KBM-7 (cell line): ENCODE measurements at regions of chr6 and their contacts with region 1.

Region 1: DNA sequence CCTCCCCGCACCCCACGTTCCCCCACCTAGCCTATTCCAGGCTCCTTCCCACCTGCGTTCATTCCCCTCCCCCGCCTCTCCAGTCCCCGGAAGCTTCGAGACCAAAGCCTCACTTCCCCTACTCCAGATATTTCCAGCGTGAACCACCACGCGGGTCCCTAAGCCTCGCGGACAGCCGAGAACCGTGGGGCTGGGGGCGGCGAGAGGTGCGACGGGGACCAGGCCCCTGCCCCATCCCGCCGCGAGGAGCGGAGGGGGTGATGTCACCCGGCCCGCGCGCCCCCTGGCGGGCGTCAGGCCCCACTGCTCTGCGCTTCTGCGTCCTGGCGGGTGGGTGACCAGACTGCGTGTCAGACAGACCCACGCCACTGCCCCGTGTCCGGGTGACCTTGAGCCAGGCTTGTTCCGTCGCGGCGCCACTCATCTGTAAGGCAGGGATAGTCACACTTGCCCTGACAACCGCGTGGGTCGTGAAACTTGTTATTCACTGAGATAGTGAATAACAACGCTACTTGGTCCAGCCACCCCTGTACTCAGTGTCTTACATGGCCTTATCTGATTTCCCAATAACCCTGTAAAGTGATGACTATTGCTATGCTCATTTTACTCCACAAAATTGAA is 9.0 kb upstream of the HSP90AB1 start:
- DNase-seq: peak; percentile 75

Region 2: DNA sequence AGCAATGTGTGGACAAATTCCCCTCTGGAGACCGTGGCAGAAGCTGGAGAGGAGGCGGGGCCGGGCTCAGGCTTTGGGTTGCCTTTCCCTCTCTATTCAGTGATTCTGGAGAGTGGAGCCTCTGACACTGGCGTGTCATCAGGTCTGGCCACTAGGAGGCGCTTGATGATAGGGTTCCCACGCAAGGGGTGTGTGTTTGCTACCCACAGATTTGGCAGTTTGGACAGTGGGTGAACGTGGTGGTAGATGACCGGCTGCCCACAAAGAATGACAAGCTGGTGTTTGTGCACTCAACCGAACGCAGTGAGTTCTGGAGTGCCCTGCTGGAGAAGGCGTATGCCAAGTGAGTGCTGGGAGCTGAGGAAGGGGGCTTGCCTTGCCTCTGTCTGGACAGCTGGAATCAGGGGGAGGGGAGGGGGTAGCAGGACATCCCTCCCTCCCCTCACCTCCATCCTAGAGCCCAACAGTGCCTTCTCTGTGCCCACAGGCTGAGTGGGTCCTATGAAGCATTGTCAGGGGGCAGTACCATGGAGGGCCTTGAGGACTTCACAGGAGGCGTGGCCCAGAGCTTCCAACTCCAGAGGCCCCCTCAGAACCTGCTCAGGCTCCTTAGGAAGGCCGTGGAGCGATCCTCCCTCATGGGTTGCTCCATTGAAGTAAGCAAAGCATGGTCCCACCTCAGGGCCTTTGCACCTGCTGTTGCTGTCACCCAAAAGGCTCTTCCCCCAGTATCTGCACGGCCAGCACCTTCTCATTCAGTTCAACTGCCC is 65.0 kb before region 1 on chr6:
- in situ Hi-C with region 1: loop called (anchors 10 kb)
- DNase-seq: peak; percentile 83